ENCODE measurements at regions of chr1 and their contacts with region 1.

Region 1: DNA sequence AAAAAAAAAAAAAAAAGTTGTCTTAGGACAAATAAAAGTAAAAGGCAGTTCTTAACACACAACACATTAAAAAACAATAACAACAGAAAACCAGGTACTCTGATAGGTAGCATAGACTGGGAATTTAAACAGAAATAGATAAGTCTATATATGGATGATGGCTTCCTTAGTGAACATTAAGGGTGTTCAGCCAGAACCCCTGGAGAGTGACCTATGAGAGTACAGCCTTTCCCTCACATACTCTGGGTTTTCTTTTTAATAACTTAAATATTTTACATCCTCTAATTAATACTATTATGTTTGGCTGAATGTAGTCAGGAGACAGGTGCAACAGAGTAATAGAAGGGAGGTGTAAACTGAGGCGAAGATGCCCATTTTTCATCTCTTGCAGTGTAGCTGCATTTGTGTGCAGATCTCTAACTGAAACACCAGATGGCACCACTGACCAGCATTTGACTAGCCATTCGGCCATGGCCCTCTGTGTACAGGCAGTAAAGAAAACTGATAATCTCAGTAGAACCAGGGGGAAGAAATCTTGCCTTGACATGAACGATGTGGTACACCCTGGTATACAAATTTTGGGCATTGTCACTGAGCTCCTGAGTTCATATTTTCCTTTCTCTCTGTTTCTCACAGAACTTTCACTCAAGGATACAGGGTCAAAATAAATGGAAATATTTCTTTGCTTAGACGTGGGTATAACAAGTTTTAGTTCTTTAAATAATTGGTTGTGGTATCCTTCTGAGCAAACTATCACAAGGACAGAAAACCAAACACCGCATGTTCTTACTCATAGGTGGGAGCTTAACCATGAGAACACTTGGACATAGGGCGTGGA is 7.6 kb downstream of the TTF2 start:
- DNase-seq: peak; percentile 43 to 48
- H3K4me3 ChIP-seq: no peak overlapping the region
- H3K27ac ChIP-seq: no peak overlapping the region
- H3K4me1 ChIP-seq: no peaks in the 10 kb centered on the region
- H3K27me3 ChIP-seq: no peaks in the 10 kb centered on the region
- CTCF ChIP-seq: peak; percentile 95

Region 2: DNA sequence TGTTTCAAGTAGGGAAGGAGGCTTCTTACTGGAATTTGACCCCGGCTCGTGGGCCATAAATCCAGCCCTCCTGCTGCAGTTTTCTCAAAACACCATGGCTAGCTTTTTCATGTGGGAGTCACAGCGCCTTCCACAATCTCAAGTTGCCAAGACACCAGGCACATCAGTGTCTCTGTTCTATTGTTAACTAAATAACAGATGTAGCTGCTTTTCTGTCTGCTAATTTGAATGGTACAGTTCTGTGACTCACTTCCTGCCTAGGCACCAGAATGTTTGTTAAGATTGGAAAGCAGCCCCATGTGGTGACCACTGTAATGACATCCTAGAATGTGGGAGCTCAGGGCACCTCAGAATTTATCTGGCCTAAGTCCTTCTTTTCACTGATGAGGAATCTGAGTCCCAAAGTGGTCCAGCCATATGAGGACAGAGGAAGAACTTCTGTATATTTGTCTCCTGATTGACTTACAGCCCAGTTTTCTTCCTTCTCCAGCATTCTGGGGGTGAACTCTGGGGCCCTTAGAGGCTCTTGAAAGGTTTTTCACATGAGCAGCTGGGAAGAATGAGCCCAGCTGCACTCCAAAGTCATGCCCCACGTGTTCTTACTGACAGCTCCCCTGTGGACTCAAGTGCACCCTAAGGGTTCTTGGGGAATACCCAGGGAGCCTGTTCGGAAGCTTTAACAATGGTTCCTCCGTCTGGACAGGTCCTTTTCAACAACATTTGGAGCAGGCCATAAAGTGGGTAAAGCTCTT is 26.3 kb after region 1 on chr1:
- CTCF ChIA-PET with region 1: no interaction called
- POLR2A ChIA-PET with region 1: interaction called, 34 read pairs
- intact Hi-C with region 1: no loop called
- DNase-seq: peak; percentile 31 to 47
- H3K4me3 ChIP-seq: no peak overlapping the region
- H3K27ac ChIP-seq: peak overlapping the region; percentile 35
- H3K4me1 ChIP-seq: peaks cover 13% of the 10 kb centered on the region; the same call in 1 of the 2 replicates
- H3K27me3 ChIP-seq: no peaks in the 10 kb centered on the region
- CTCF ChIP-seq: peak; percentile 65

Region 3: DNA sequence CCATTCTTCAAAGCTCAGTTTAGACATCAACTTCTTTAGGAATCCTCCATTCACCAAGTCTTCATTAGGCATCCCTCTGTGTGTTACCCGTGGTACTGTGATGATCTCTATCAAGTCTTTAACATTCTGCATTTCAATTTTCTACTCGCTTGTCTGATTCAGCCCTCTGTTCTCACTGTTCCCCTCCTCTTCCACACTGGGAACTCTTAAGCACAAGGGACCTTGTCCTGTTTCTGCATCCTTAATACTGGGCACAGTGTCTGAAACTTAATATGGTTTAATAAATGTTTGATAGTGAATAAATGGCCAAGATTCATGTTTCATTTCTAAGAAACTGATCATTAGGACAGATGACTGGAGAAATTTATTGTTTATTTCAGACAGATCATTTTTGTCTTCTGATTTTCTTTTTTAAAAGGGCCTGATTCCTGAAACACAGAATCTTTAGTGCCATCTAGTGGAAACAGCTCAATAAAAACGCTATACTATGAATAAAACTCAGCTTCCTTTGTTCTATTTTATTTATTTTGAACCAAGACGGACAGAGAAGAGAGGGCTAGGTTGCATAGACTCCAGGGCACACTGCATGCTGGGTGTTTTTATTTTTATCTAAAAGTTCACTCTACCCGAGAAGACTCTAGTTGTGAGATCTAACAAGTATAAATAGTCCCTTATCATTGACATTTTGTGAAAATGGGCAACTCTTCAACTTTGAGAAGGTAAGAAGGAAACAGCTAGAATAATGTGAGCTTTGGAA is 60.7 kb after region 1 on chr1:
- CTCF ChIA-PET with region 1: interaction called, 5 read pairs
- POLR2A ChIA-PET with region 1: no interaction called
- intact Hi-C with region 1: loop called (anchors 1 kb)
- DNase-seq: peak in 1 of 2 experiments; percentile 47
- H3K4me3 ChIP-seq: no peak overlapping the region
- H3K27ac ChIP-seq: no peak overlapping the region
- H3K4me1 ChIP-seq: peaks cover 14% of the 10 kb centered on the region; the same call in 1 of the 2 replicates
- H3K27me3 ChIP-seq: no peaks in the 10 kb centered on the region
- CTCF ChIP-seq: peak; percentile 82

Region 4: DNA sequence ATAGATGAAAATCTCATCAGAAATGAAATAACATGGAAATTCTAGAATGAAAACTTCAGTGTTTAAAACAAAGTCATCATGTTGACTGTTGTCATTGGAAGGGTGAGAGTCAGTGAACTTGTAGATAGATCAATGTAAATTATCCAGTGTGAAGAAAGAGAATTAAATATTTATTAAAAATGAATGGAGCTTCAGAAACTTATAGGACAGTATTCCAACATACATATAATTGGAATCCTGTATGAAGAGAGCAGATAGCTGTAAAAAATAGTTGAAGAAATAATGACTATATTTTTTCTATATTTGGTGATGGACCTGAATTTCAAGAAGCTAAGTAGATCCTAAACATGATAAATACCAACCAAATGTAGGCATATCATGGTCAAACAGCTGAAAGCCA is 359.5 kb after region 1 on chr1:
- CTCF ChIA-PET with region 1: no interaction called
- POLR2A ChIA-PET with region 1: no interaction called
- intact Hi-C with region 1: no loop called
- DNase-seq: no peak
- H3K4me3 ChIP-seq: no peak overlapping the region
- H3K27ac ChIP-seq: no peak overlapping the region
- H3K4me1 ChIP-seq: no peaks in the 10 kb centered on the region
- H3K27me3 ChIP-seq: no peaks in the 10 kb centered on the region
- CTCF ChIP-seq: no peak

Region 5: GRCh38 chr1:117512743-117513321 is 445.1 kb after region 1 on chr1:
- CTCF ChIA-PET with region 1: interaction called, 3 read pairs
- POLR2A ChIA-PET with region 1: no interaction called
- intact Hi-C with region 1: loop called (anchors 5 kb)
- DNase-seq: no peak
- H3K4me3 ChIP-seq: no peak overlapping the region
- H3K27ac ChIP-seq: no peak overlapping the region
- H3K4me1 ChIP-seq: no peaks in the 10 kb centered on the region
- H3K27me3 ChIP-seq: no peaks in the 10 kb centered on the region
- CTCF ChIP-seq: peak; percentile 97

Region 6: DNA sequence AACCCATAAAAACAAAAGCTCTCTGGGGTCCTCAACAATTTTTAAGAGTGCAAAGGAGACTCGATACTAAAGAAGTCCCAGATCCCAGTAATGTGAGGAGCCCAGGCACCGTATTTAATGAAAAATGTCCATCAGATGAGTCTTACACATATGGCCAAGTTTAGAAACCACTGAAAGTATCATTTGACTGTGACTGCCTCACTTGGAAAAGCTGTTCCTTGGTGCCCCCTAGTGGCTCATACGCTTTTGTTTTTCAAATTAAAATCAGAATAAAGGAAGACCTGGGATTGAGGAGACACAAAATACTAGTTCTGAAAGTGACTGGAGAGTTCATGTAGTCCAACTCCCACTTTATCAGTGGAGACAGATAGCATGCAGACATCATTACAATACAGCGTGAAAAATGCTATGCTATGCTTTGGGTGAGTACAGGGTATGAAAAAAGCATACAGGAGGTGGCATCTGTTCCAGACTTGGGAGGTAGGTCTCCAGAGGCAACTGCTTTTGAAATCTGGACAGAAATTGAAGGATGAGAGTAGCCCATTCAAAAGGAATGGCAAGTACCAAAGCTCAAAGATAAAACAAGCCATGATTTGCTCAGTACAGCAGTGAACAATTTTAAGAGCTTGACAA is 827.8 kb after region 1 on chr1:
- CTCF ChIA-PET with region 1: no interaction called
- POLR2A ChIA-PET with region 1: no interaction called
- intact Hi-C with region 1: loop called (anchors 1 kb)
- DNase-seq: peak; percentile 51 to 69
- H3K4me3 ChIP-seq: no peak overlapping the region
- H3K27ac ChIP-seq: no peak overlapping the region
- H3K4me1 ChIP-seq: no peaks in the 10 kb centered on the region
- H3K27me3 ChIP-seq: no peaks in the 10 kb centered on the region
- CTCF ChIP-seq: peak; percentile 98